Lower lobe of right lung (tissue), 2 donors: ENCODE measurements at regions of chr11 and their contacts with region 1.

Region 1: DNA sequence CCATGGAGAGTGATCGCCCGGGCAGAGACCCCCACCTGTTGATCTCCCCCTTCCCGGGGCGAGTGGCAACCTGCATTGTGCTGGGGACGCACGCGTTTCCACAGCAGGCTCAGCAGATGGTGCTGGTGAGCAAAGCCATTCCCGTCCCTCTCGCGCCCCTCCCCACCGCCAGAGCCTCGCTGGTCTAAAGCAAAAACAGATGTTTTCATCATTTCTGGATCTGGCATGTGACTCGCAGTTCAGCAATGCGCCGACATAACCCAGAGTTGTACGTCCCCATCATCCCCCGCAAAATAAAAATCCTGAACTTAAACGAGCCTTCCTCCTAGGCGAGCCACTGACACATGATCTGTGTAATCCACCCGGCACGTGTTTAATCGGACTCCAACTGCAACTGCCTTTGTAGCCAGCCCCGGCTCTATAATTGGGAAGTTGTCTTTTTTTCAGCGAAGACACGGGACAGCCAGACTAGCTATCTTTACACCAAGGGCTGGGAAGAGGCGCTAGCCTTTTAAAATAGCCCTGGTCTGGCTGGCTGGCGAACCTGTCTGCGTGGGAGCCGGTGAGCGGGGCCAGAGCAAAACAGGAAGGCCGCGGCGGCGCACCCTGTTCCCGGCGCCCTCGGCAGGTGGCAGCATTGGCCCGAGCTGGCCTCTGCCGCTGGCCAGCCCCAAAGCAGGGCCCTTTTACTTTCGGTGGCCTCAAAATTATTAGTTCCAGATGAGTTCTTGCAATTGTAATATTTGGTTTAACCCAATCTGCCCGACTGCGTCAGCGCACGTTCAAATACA is 203.0 kb upstream of the SORL1-AS1 start:
- DNase-seq: peak; percentile 87
- ATAC-seq: peak; percentile 97
- H3K4me3 ChIP-seq: peak overlapping the region; percentile 53
- H3K27ac ChIP-seq: peak overlapping the region; percentile 92
- H3K4me1 ChIP-seq: peaks cover 11% of the 10 kb centered on the region
- H3K27me3 ChIP-seq: no peaks in the 10 kb centered on the region
- CTCF ChIP-seq: peak; percentile 88

Region 2: DNA sequence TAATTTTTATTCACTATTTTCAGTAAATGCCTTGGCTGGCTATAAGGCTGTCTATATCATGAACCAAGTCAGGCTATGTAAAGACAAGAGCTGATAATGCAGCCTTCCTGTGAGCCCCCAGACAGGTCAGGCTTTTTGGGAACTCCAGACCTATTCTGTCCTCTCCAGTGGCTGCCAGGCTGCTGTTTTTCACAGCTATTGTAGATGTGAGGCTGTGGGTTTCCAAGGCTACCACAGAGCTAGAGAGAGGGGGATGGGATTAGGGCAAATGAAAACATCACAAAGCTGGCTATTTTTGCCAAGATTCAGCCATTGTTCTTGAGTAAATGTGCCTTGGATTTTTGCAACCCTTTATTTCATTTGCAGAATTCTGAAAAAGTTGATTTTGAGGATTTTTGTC is 147.3 kb before region 1 on chr11:
- intact Hi-C with region 1: no loop called
- DNase-seq: no peak
- ATAC-seq: no peak
- H3K4me3 ChIP-seq: no peak overlapping the region
- H3K27ac ChIP-seq: no peak overlapping the region
- H3K4me1 ChIP-seq: no peaks in the 10 kb centered on the region
- H3K27me3 ChIP-seq: no peaks in the 10 kb centered on the region
- CTCF ChIP-seq: no peak

Region 3: GRCh38 chr11:122101625-122102291 is 446.0 kb after region 1 on chr11:
- intact Hi-C with region 1: loop called (anchors 5 kb)
- DNase-seq: no peak
- ATAC-seq: peak; percentile 83 to 92
- H3K4me3 ChIP-seq: peak overlapping the region; percentile 51
- H3K27ac ChIP-seq: peak overlapping the region; percentile 61
- H3K4me1 ChIP-seq: peaks cover 13% of the 10 kb centered on the region
- H3K27me3 ChIP-seq: peaks cover 17% of the 10 kb centered on the region
- CTCF ChIP-seq: peak; percentile 53

Region 4: DNA sequence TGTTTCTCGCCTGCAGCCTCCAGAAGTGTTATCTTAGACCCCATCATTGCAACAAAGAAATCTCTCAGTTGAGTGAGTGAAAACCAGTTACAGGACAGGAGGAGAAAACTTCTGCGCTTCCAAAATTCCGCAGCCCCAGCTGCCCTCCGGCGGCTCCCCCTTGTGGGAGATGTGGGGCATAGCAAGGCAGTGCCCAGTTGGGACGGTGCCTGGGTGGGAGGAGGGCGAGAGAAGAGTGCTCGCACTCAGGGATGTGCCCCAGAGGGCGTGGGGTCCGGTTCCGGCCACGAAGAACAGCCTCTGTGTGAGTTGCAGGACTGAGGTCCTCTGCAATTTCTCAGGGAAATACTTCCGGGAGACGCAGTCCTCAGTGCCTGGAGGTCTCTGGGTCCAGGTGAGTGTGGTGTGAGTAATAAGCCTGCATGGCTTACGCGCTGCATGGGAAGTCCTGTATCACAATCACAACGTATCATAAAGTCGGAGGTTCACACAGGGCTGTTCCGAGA is 547.3 kb after region 1 on chr11:
- intact Hi-C with region 1: loop called (anchors 5 kb)
- DNase-seq: peak; percentile 65
- ATAC-seq: peak; percentile 93 to 94
- H3K4me3 ChIP-seq: peak overlapping the region; percentile 41
- H3K27ac ChIP-seq: peak overlapping the region; percentile 48
- H3K4me1 ChIP-seq: peaks cover 27% of the 10 kb centered on the region
- H3K27me3 ChIP-seq: no peaks in the 10 kb centered on the region
- CTCF ChIP-seq: peak; percentile 96

Region 5: GRCh38 chr11:122360875-122361274 is 705.1 kb after region 1 on chr11:
- intact Hi-C with region 1: no loop called
- DNase-seq: no peak
- ATAC-seq: no peak
- H3K4me3 ChIP-seq: no peak overlapping the region
- H3K27ac ChIP-seq: no peak overlapping the region
- H3K4me1 ChIP-seq: no peaks in the 10 kb centered on the region
- H3K27me3 ChIP-seq: no peaks in the 10 kb centered on the region
- CTCF ChIP-seq: peak; percentile 13